ENCODE measurements at regions of chr22 and their contacts with region 1.

Region 1: GRCh38 chr22:40679964-40680818 is 907 bp downstream of the MCHR1 start:
- DNase-seq: no peak
- H3K4me3 Mint-ChIP-seq: no peak overlapping the region
- H3K27ac Mint-ChIP-seq: peak overlapping the region; percentile 12
- H3K4me1 Mint-ChIP-seq: peaks cover 38% of the 10 kb centered on the region
- H3K27me3 Mint-ChIP-seq: peaks cover 12% of the 10 kb centered on the region

Region 2: DNA sequence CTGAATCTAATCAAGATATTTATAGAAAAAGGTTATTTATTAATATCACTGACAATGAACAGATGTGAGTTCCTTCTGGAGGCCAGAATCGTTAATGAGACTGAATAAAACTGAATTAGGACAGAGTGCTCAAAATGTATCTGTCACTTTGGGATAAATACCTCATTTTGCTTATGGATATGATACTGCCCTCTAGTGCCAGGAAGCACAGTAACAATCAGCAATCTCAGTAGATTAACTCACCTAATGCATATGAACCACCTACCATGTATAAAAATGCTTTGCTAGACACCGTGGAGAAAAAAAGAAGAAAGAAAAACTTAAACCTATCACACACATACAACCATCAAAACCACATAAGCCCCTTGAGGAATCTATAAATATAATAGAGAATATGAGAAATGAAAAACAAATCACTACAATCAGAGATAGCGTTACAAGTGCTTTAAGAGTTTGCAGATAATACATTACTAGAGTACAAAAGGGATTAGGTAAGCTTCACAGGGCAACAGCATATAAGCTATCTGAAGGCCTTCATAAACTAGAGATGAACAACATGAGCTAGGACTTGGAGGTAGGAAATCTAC is 192.4 kb before region 1 on chr22:
- intact Hi-C with region 1: no loop called
- DNase-seq: no peak
- H3K4me3 Mint-ChIP-seq: no peak overlapping the region
- H3K27ac Mint-ChIP-seq: no peak overlapping the region
- H3K4me1 Mint-ChIP-seq: peaks cover 39% of the 10 kb centered on the region
- H3K27me3 Mint-ChIP-seq: no peaks in the 10 kb centered on the region

Region 3: GRCh38 chr22:40651563-40652501 is 28.4 kb before region 1 on chr22:
- intact Hi-C with region 1: loop called (anchors 1 kb)
- DNase-seq: peak; percentile 71
- H3K4me3 Mint-ChIP-seq: peak overlapping the region; percentile 72
- H3K27ac Mint-ChIP-seq: peak overlapping the region; percentile 91
- H3K4me1 Mint-ChIP-seq: peaks cover 32% of the 10 kb centered on the region
- H3K27me3 Mint-ChIP-seq: no peaks in the 10 kb centered on the region

Region 4: GRCh38 chr22:40714192-40714951 is 34.2 kb after region 1 on chr22:
- intact Hi-C with region 1: loop called (anchors 1 kb)
- DNase-seq: no peak
- H3K4me3 Mint-ChIP-seq: no peak overlapping the region
- H3K27ac Mint-ChIP-seq: no peak overlapping the region
- H3K4me1 Mint-ChIP-seq: peaks cover 22% of the 10 kb centered on the region
- H3K27me3 Mint-ChIP-seq: peaks cover 13% of the 10 kb centered on the region

Region 5: DNA sequence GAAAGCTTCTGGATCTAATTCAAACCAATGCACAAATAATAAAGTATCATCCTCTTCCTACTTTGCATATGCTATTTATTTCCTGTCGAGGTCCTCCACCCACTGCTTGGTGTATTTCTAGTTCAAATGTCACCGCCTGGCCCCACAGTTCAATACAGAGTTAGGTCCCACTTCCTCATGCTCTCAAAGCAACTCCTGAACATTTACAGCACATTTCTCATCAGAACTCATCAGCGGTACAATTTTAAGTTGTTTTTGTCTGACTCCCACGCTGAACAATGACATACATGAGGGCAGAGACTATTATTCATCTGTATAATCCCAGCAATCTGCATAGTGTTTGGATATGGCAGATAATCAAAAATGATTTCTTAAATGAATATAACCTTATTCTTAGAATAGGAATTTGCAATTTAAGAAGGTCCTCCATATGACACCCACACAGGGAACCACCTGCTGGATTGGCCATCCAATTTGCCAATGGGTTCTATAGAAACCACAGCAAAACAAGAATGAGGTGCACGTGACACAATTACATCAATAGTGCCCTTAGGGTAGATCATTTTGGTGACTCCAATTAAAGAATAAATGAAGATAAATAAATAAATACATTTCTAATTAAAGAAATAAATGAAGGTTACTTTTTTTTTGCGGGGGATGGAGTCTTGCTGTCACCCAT is 84.7 kb after region 1 on chr22:
- intact Hi-C with region 1: loop called (anchors 1 kb)
- DNase-seq: no peak
- H3K4me3 Mint-ChIP-seq: peak overlapping the region; percentile 31
- H3K27ac Mint-ChIP-seq: peak overlapping the region; percentile 84
- H3K4me1 Mint-ChIP-seq: peaks cover 9% of the 10 kb centered on the region
- H3K27me3 Mint-ChIP-seq: no peaks in the 10 kb centered on the region

Region 6: GRCh38 chr22:40898850-40899357 is 218.7 kb after region 1 on chr22:
- intact Hi-C with region 1: loop called (anchors 1 kb)
- DNase-seq: peak; percentile 8
- H3K4me3 Mint-ChIP-seq: no peak overlapping the region
- H3K27ac Mint-ChIP-seq: no peak overlapping the region
- H3K4me1 Mint-ChIP-seq: peaks cover 10% of the 10 kb centered on the region
- H3K27me3 Mint-ChIP-seq: no peaks in the 10 kb centered on the region

Measured in activated T-helper 1 cell treated with anti-CD3 and anti-CD28 coated beads, Interleukin-12 subunit alpha, Interleukin-12 subunit beta, Interleukin-2, Interleukin-4 antibody, amounts not matched to agents 30 ng/mL and 10 ng/mL and 1 ng/mL, durations not matched to agents 14 hours and 24 hours and 36 hours (primary cell).